ENCODE measurements at regions of chr12 and their contacts with region 1.

Region 1: DNA sequence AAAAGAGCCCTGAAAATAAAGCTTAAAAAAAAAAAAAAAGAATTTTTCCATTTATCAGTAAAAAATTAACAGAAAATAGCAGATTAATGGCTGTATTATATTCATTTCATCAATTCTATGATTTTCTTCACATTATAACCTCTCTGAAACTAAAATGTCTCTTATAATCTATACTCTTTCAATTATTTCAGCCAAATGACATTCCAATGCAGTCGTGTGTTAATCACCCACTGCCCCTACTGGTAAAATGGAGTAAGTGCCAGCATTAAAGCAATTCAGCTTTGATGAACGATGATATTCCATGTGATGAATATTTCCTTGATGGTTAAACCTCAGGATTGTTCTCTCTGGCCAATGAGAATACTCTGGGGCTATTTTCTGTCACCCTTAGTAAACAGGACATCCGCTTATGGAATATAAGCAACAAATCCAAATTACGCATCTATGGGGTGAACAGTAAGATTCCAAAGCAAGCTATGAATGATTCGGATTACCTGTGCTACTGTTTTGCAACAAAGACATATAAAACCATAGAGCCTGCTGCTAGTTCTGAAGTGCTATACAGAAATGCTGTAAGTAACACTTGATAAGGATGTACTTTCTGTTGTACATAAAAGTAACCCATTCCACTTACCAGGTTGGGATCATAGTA is 20.3 kb upstream of the SYCP3 start:
- DNase-seq: peak in 6 of 9 donors; percentile 16 to 41 (median 32)
- ATAC-seq: peak; percentile 73
- H3K4me3 ChIP-seq: no peak overlapping the region
- H3K4me3 Mint-ChIP-seq: no peak overlapping the region
- H3K27ac ChIP-seq: no peak overlapping the region
- H3K27ac Mint-ChIP-seq: no peak overlapping the region
- H3K4me1 ChIP-seq: no peaks in the 10 kb centered on the region
- H3K4me1 Mint-ChIP-seq: peaks cover 0 to 4% (median 2%) of the 10 kb centered on the region in 7 donors
- H3K27me3 ChIP-seq: no peaks in the 10 kb centered on the region
- H3K27me3 Mint-ChIP-seq: no peaks in the 10 kb centered on the region

Region 2: GRCh38 chr12:101414533-101415119 is 344.9 kb before region 1 on chr12:
- CTCF ChIA-PET with region 1: interaction called, 5 read pairs
- POLR2A ChIA-PET with region 1: no interaction called
- intact Hi-C with region 1: loop called (anchors 1 to 2 kb)
- DNase-seq: peak in 5 of 9 donors; percentile 11 to 23 (median 12)
- ATAC-seq: peak; percentile 40
- H3K4me3 ChIP-seq: no peak overlapping the region
- H3K4me3 Mint-ChIP-seq: no peak overlapping the region
- H3K27ac ChIP-seq: no peak overlapping the region
- H3K27ac Mint-ChIP-seq: no peak overlapping the region
- H3K4me1 ChIP-seq: no peaks in the 10 kb centered on the region
- H3K4me1 Mint-ChIP-seq: peaks cover 0 to 5% (median 0%) of the 10 kb centered on the region in 7 donors
- H3K27me3 ChIP-seq: no peaks in the 10 kb centered on the region
- H3K27me3 Mint-ChIP-seq: peaks cover 0 to 29% (median 2%) of the 10 kb centered on the region in 5 donors

Region 3: GRCh38 chr12:101490286-101490920 is 269.1 kb before region 1 on chr12:
- CTCF ChIA-PET with region 1: no interaction called
- POLR2A ChIA-PET with region 1: no interaction called
- intact Hi-C with region 1: loop called in 1 of 2 experiments (anchors 2 kb)
- DNase-seq: no peak
- ATAC-seq: no peak
- H3K4me3 ChIP-seq: no peak overlapping the region
- H3K4me3 Mint-ChIP-seq: no peak overlapping the region
- H3K27ac ChIP-seq: no peak overlapping the region
- H3K27ac Mint-ChIP-seq: no peak overlapping the region
- H3K4me1 ChIP-seq: no peaks in the 10 kb centered on the region
- H3K4me1 Mint-ChIP-seq: peaks cover 0 to 1% (median 0%) of the 10 kb centered on the region in 7 donors
- H3K27me3 ChIP-seq: no peaks in the 10 kb centered on the region
- H3K27me3 Mint-ChIP-seq: peaks cover 0 to 16% (median 11%) of the 10 kb centered on the region in 5 donors

Region 4: GRCh38 chr12:101570047-101570446 is 189.5 kb before region 1 on chr12:
- CTCF ChIA-PET with region 1: interaction called, 7 read pairs
- POLR2A ChIA-PET with region 1: interaction called, 4 read pairs
- intact Hi-C with region 1: loop called in 1 of 2 experiments (anchors 1 kb)
- DNase-seq: no peak
- ATAC-seq: no peak
- H3K4me3 ChIP-seq: no peak overlapping the region
- H3K4me3 Mint-ChIP-seq: no peak overlapping the region
- H3K27ac ChIP-seq: no peak overlapping the region
- H3K27ac Mint-ChIP-seq: no peak overlapping the region
- H3K4me1 ChIP-seq: no peaks in the 10 kb centered on the region
- H3K4me1 Mint-ChIP-seq: peaks cover 0 to 7% (median 4%) of the 10 kb centered on the region in 7 donors
- H3K27me3 ChIP-seq: peaks cover 0 to 2% of the 10 kb centered on the region in 2 donors
- H3K27me3 Mint-ChIP-seq: peaks cover 0 to 23% (median 20%) of the 10 kb centered on the region in 5 donors

Region 5: GRCh38 chr12:101670007-101670687 is 89.4 kb before region 1 on chr12:
- CTCF ChIA-PET with region 1: interaction called, 5 read pairs
- POLR2A ChIA-PET with region 1: no interaction called
- intact Hi-C with region 1: loop called (anchors 1 to 2 kb)
- DNase-seq: peak in 7 of 9 donors; percentile 30 to 59 (median 54)
- ATAC-seq: peak; percentile 88
- H3K4me3 ChIP-seq: no peak overlapping the region
- H3K4me3 Mint-ChIP-seq: peak overlapping the region in 4 of 10 donors; percentile 30 to 44 (median 39)
- H3K27ac ChIP-seq: no peak overlapping the region
- H3K27ac Mint-ChIP-seq: peak overlapping the region in 8 of 9 donors; percentile 10 to 71 (median 40)
- H3K4me1 ChIP-seq: peaks cover 4 to 18% of the 10 kb centered on the region in 2 donors
- H3K4me1 Mint-ChIP-seq: peaks cover 13 to 28% (median 21%) of the 10 kb centered on the region in 7 donors
- H3K27me3 ChIP-seq: no peaks in the 10 kb centered on the region
- H3K27me3 Mint-ChIP-seq: peaks cover 5 to 15% (median 9%) of the 10 kb centered on the region in 5 donors

Measured in naive thymus-derived CD4-positive, alpha-beta T cell (primary cell).